A549 (cell line): ENCODE measurements at regions of chr2 and their contacts with region 1.

Region 1: DNA sequence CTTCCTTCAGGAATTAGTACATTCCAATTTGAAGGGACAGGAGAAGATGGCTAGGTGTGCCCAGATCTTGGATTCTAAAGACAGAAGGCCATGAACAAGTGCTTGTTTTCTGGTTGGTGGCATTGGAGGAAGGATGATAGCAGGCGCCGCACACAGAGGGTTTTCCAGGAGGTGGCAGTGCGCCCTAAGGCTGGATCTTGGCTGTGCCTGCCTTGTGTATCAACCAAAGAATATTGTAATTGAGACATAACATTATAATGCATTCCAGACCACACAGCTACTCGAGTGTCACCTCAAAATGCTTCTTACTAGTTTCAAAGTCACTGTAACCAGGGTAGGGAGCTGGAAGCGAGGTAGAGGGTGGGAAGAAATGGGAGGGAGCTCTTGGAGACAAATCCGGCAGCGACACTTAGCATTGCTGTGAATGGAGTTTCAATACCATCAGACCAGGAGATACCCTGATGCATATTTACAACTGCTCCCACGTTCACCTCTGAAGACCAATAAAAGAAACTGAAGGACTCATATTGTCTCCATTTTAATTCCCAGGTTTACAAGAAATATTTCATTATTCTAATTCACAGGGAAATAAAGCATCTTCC is 42.5 kb downstream of the CPO start:
- DNase-seq: peak; percentile 22 to 62
- ATAC-seq: peak; percentile 94 to 97
- H3K4me3 ChIP-seq: no peak overlapping the region
- H3K27ac ChIP-seq: peak overlapping the region in 1 of 2 experiments; percentile 20; a peak in 1 of 6 replicates
- H3K4me1 ChIP-seq: peaks cover 15% of the 10 kb centered on the region; the same call in 2 of the 3 replicates
- CTCF ChIP-seq: peak; percentile 88
- EP300 ChIP-seq: no peak
- POLR2A ChIP-seq: no peak
- RAD21 ChIP-seq: peak; percentile 95 to 96

Region 2: DNA sequence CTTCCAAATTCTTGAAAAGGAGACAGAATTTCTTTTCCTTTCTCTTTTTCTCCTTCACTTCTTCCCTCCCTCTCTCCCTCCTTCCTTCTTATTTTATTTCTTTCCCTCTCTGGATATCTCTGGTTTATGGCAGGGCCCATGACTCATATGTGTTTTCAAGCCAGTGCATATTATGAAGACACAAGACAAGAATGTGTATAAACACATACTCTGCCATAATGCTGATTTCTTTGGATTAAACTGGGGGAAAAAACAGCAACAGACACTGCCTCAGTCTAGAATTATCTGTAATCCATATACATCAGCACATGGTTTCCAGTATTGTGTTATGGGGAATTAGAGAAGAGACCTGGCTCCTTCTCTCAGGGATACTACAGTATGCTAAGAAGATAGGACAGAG is 125.3 kb before region 1 on chr2:
- CTCF ChIA-PET with region 1: no interaction called
- POLR2A ChIA-PET with region 1: no interaction called
- DNase-seq: no peak
- ATAC-seq: no peak
- H3K4me3 ChIP-seq: no peak overlapping the region
- H3K27ac ChIP-seq: no peak overlapping the region
- H3K4me1 ChIP-seq: no peaks in the 10 kb centered on the region
- CTCF ChIP-seq: no peak
- EP300 ChIP-seq: no peak
- POLR2A ChIP-seq: no peak
- RAD21 ChIP-seq: no peak

Region 3: DNA sequence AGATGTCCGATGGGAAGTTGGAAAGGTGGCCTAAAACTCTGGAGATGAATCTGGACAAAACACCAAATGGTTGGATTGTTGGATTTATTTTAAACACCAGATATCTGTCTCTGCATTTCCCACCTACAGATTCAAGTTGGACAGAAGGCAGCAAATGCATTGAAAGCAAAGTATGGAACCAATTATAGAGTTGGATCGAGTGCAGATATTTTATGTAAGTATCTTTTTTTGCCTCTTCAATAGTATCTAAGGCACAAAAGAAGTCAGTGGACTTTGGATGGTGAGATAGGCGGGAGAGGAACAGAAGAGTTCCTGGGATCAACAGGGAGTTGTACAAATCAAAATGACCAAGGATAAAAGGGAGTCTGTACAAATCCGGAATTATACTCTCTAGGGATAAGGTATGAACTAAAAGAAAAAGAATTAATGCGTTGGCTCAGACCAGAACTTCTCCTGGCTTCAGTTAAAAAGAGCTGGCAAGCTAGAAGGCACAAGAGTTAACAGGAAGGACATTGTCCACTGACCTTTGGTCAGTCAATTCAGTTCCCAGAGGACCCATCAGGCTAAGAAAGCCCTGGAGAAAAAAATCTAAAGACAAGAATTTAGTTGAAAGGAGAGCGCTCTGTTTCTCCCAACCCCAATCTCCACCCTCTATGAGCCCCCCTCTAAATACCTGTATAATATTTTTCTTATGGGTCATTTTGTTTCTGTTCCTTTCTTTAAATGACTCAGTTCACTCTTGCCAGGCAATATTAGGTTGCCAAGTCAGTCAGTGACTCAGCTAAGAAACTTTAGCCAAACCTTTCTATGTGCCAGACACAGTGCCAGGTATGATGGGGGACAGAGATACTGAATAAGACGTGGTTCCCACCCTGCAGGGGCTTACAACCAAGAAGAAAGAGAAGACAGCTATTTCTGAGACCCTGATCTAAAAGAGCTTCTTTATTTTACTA is 13.4 kb before region 1 on chr2:
- CTCF ChIA-PET with region 1: interaction called, 14 read pairs
- POLR2A ChIA-PET with region 1: no interaction called
- DNase-seq: no peak
- ATAC-seq: no peak; a peak in 1 of 6 replicates
- H3K4me3 ChIP-seq: no peak overlapping the region
- H3K27ac ChIP-seq: no peak overlapping the region
- H3K4me1 ChIP-seq: peaks cover 9% of the 10 kb centered on the region; the same call in 2 of the 3 replicates
- CTCF ChIP-seq: no peak
- EP300 ChIP-seq: no peak
- POLR2A ChIP-seq: no peak
- RAD21 ChIP-seq: no peak

Region 4: DNA sequence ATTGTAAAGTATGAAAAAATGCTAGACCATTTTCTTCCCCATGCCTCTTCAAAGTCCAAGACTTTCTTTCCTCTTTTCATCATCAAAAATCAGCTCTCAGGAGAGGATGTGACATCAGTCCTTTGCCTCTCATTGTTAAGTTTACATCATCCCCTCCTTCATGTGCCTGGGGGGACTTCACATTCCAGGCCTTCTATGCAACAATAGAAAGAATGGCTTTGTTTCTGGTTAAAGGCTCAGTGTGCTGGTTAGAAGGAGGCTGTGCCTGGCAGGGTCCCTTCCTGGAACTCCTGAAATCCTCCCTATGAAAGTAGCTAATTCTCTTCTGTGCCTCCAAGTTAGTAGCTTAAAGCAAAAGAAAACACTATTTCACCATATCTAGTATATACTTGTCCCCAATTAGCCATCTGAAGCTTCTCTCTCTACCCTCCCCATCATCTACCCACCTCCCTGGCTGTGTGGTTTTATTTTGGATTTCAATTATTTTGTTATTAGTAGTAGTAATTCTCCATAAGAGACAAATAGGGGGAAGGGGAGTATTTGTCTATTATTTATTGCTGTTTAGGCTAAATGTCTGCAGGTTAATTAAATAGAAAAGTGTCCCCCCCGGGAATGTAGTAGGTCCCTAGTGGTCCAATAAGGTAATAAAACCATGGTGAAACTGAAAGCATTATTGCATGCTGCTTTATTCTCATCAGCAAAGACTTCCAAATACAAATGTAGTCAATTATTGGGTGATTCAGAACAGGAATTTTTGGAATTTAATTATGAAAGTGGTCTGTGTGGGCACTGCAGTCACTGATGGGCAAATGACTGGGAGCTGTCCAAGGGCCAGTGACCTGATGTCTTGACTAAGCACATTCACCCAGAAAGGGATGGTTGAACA is 26.5 kb after region 1 on chr2:
- CTCF ChIA-PET with region 1: no interaction called
- POLR2A ChIA-PET with region 1: no interaction called
- DNase-seq: no peak
- ATAC-seq: peak; percentile 34 to 42; a peak in 2 of 6 replicates
- H3K4me3 ChIP-seq: no peak overlapping the region
- H3K27ac ChIP-seq: no peak overlapping the region
- H3K4me1 ChIP-seq: 0 out of 3 replicates have a peak, but pooled peaks cover 3% of the 10 kb centered on the region
- CTCF ChIP-seq: no peak
- EP300 ChIP-seq: no peak
- POLR2A ChIP-seq: no peak
- RAD21 ChIP-seq: no peak